ENCODE measurements at regions of chr12 and their contacts with region 1.

Region 1: GRCh38 chr12:111024205-111024801 is 103.9 kb upstream of the MYL2 start:
- DNase-seq: peak; percentile 60
- H3K4me3 Mint-ChIP-seq: no peak overlapping the region
- H3K27ac Mint-ChIP-seq: no peak overlapping the region
- H3K4me1 Mint-ChIP-seq: peaks cover 3% of the 10 kb centered on the region
- H3K27me3 Mint-ChIP-seq: peaks cover 14% of the 10 kb centered on the region

Region 2: DNA sequence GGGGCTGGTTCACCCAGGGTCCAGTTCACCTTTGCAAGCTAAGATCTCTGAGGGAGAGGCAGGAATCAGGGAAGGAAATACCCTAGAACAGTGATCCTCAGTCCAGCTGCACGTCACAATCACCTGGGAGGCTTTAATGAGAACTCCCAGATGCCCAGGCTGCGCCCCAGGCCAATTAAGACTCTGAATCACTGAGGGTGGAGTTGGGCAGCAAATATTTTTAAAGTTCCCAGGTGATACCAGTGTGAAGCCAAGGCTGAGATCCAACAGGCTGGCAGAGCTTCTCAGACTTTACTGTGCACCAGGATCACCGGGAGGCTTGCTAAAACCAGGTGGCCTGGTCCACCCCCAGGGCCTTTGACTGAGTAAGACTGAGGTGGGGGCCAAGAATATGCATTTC is 127.7 kb before region 1 on chr12:
- CTCF ChIA-PET with region 1: no interaction called
- POLR2A ChIA-PET with region 1: no interaction called
- intact Hi-C with region 1: loop called (anchors 1 kb)
- DNase-seq: no peak
- H3K4me3 Mint-ChIP-seq: no peak overlapping the region
- H3K27ac Mint-ChIP-seq: no peak overlapping the region
- H3K4me1 Mint-ChIP-seq: peaks cover 2% of the 10 kb centered on the region
- H3K27me3 Mint-ChIP-seq: peaks cover 14% of the 10 kb centered on the region

Region 3: DNA sequence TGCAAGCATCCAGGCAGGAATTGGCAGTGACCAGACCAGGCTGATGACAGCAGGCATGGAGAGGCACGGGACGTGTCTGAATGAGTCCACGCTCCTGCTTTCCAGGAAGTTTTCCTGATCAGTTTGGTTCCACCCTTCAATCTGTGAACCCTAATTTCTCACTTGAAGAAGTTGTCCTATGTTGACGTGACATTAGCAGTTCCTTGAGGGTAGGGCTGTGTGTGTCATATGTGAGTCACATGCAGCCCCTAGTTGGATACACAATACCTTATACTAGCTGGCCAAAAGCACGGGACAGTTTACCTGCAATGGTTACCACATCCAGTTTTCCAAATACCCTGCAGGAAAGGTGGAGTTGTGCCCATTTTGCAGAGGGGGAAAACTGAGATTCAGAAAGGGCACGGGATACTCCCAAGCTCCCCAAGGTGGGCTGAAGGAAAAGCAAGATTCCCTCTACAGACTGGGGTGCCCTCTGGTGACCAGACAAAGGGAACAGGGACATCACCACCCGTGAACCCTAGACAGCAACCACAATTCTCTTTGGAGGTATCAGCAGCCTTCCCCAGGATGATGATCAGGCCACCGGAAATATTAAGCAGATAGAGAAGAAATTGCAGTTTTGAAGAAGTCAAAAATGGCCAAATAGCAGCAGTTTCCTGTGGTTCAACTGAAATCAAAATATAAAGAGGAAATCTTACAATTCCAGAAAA is 150.1 kb after region 1 on chr12:
- CTCF ChIA-PET with region 1: no interaction called
- POLR2A ChIA-PET with region 1: no interaction called
- intact Hi-C with region 1: loop called (anchors 10 kb)
- DNase-seq: no peak
- H3K4me3 Mint-ChIP-seq: no peak overlapping the region
- H3K27ac Mint-ChIP-seq: no peak overlapping the region
- H3K4me1 Mint-ChIP-seq: no peaks in the 10 kb centered on the region
- H3K27me3 Mint-ChIP-seq: peaks cover 34% of the 10 kb centered on the region

Region 4: DNA sequence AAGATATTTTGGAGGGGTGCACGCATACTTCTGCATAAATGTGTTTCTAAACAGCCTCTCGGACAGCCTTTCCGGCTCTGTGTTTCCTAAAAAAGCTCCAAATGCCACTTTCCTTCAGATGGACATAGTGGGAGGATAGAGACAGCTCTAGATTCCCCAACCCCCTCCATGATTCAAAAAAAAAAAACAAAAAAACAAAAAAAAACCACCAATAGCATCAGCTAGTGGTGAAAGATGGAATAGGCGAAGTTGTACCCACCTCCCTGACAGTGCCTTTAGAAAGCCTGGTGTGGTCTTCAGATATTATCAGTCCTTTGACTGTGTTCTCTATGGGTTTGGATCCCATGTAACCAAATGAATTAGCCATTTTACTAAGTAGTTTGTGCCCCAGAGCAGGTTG is 250.5 kb after region 1 on chr12:
- CTCF ChIA-PET with region 1: interaction called, 9 read pairs
- POLR2A ChIA-PET with region 1: no interaction called
- intact Hi-C with region 1: loop called (anchors 10 kb)
- DNase-seq: no peak
- H3K4me3 Mint-ChIP-seq: no peak overlapping the region
- H3K27ac Mint-ChIP-seq: no peak overlapping the region
- H3K4me1 Mint-ChIP-seq: no peaks in the 10 kb centered on the region
- H3K27me3 Mint-ChIP-seq: peaks cover 7% of the 10 kb centered on the region

Region 5: DNA sequence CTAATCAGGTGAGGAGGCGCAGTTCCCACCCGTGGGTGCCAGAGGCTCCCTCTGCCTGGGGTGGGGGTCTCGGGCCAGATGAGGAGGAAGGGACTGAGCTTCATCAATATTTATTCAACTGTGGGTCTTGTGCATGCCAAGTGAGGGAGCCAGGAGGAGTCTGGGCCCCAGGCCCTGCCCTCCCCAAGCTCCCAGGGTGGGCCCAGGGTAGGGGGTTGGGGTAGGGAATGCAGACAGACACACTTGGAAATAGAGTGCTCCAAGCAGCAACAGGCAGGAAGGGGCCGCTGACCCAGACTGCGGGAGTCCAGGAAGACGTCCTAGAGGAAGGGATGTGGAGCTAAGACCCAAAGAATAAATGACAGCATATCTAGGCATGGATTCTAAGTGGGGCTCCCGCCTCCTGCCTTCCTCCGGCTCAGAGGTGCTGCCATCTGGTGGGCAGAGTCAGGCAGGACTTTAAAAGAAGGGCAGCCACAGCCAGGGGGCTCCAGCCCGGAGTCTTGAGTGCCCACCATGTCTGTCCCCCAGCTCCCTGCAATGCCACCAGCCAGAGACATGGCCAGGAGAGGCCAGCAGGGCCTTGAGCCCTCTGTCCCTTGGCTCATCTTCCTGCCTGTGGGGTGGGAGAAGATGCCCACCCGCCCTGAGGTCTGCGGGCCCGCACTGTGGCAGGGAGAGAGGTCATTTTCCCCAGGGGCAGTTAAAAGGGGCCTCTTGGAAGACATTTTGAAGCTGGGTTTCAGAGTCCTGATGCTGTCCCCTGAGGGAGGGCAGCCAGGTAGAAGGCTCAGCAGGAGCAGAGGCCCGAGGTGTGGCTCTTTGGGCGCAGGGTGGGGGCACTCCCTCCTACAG is 274.5 kb after region 1 on chr12:
- CTCF ChIA-PET with region 1: interaction called, 6 read pairs
- POLR2A ChIA-PET with region 1: no interaction called
- intact Hi-C with region 1: loop called (anchors 1 kb)
- DNase-seq: peak; percentile 58
- H3K4me3 Mint-ChIP-seq: no peak overlapping the region
- H3K27ac Mint-ChIP-seq: no peak overlapping the region
- H3K4me1 Mint-ChIP-seq: no peaks in the 10 kb centered on the region
- H3K27me3 Mint-ChIP-seq: no peaks in the 10 kb centered on the region

Region 6: GRCh38 chr12:111313833-111314259 is 289.5 kb after region 1 on chr12:
- CTCF ChIA-PET with region 1: interaction called, 12 read pairs
- POLR2A ChIA-PET with region 1: no interaction called
- intact Hi-C with region 1: no loop called
- DNase-seq: peak; percentile 77
- H3K4me3 Mint-ChIP-seq: no peak overlapping the region
- H3K27ac Mint-ChIP-seq: no peak overlapping the region
- H3K4me1 Mint-ChIP-seq: no peaks in the 10 kb centered on the region
- H3K27me3 Mint-ChIP-seq: peaks cover 11% of the 10 kb centered on the region